Endothelial cell of umbilical vein (primary cell): ENCODE measurements at regions of chr17 and their contacts with region 1.

Region 1: DNA sequence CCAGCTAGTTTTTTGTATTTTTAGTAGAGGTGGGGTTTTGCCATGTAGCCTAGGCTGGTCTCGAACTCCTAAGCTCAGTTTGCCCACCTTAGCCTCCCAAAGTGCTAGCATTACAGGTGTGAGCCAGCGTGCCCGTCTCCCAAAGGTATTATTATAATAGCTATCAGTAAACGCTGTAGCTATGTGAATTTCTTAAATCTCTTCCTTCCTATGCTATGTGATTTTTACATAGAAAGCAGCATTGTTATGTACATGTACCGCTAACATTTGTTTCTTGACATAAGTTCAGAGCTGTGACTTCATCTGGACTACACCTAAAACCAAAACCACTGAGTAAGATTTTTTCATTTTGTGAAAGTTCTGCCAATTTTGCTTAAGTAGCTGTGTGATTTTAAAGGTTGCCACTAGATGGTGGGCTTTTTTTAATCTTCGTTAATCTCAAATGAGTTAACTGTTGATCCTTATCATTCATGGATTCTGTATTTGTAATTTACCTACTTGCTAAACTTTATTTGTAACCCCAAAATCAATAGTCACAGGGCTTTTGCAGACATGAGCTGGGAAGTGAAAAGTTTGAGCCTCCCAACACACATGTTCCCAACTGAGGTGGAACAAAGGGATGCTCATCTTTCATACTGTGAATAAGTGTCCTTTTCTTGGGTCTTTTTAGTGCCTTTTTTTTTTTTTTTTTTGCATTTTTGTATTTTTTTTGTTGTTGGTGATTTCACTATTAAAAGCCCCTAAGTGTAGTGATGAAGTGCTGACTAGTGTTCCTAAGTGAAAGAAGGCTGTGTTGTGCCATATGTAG is 21.9 kb downstream of the PRKAR1A start:
- DNase-seq: peak; percentile 29
- H3K4me3 ChIP-seq: no peak overlapping the region
- H3K27ac ChIP-seq: no peak overlapping the region
- H3K4me1 ChIP-seq: no peaks in the 10 kb centered on the region
- H3K27me3 ChIP-seq: no peaks in the 10 kb centered on the region
- CTCF ChIP-seq: peak; percentile 12 to 13
- POLR2A ChIP-seq: no peak

Region 2: GRCh38 chr17:68435876-68436842 is 97.9 kb before region 1 on chr17:
- CTCF ChIA-PET with region 1: no interaction called
- POLR2A ChIA-PET with region 1: no interaction called
- dilution Hi-C with region 1: no loop called
- intact Hi-C with region 1: no loop called
- DNase-seq: peak; percentile 83
- H3K4me3 ChIP-seq: no peak overlapping the region
- H3K27ac ChIP-seq: peak overlapping the region; percentile 63
- H3K4me1 ChIP-seq: peaks cover 30% of the 10 kb centered on the region
- H3K27me3 ChIP-seq: no peaks in the 10 kb centered on the region
- CTCF ChIP-seq: peak; percentile 89 to 95
- POLR2A ChIP-seq: no peak

Region 3: DNA sequence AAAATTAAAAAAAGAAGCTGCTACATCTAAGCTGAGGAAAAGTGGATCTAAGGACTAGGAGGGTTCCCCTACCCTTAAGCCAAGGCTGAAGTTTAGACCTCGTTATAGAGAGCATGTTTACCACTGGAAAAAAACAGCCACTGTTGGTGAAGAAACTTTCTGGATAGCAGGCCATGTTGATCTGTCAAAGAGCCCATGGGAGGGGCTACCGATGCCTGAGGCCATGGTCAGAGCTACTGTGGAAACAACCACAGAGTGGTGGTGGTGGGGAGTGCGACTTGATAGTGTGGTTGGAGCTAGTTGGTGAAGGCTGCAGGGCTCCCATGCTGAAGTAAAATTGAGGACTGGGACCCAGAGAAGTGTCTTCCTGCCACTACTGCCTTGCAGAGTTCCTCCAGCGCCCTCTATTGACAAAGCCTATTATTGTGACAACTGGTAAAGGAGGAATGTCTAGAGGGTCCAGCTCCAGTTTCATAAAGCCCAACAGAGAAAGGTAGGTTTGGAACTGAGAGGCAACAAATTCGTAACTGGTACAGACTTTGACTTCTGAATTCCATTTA is 79.7 kb after region 1 on chr17:
- CTCF ChIA-PET with region 1: interaction called, 9 read pairs
- POLR2A ChIA-PET with region 1: no interaction called
- dilution Hi-C with region 1: no loop called
- intact Hi-C with region 1: loop called (anchors 5 kb)
- DNase-seq: peak; percentile 28
- H3K4me3 ChIP-seq: no peak overlapping the region
- H3K27ac ChIP-seq: no peak overlapping the region
- H3K4me1 ChIP-seq: no peaks in the 10 kb centered on the region
- H3K27me3 ChIP-seq: no peaks in the 10 kb centered on the region
- CTCF ChIP-seq: peak; percentile 45 to 56
- POLR2A ChIP-seq: no peak